Activated CD4-positive, alpha-beta T cell treated with anti-CD3 and anti-CD28 coated beads for 36 hours (primary cell): ENCODE measurements at regions of chr7 and their contacts with region 1.

Region 1: DNA sequence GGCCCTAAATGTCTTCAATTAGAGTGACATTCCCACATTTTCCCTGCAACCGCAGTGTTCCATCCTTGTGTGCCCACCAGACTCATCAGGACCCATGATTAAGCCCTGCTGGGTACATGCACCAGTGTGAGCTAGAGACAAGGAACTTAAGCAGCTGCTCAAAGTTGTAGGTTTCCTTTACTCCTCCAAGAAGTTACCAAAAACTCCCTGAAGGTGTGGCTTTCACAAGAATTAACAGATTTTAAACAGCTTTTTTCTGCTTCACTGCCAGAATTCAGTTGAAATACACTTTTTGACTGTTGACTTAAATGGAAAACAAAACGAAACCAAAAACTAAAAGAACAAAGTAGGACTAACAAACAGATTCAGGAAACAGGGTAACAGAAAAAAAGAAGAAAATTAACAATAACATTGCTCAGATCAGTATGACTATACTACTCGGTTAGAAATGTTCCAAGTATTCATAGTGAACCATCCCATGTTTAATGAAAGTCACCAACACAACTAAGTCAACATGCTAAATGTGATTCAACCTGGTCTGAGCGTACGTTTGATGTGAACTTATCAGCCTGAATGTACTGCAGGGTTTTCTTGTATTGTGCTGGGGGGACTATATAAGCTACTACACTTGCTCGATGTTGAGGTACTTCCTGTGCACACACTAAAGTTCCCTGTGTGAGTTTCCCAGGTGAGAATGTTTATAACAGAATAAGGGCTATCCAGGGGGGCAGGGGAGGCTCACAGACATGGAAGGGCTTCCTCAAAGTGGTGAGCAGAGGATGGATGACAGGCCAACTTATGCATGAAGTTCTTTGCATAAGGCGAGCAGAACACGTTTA is 22.2 kb downstream of the SLC37A3 start:
- DNase-seq: peak; percentile 45
- ATAC-seq: peak; percentile 90
- H3K4me3 Mint-ChIP-seq: peak overlapping the region; percentile 57
- H3K27ac Mint-ChIP-seq: peak overlapping the region; percentile 95
- H3K4me1 Mint-ChIP-seq: peaks cover 53% of the 10 kb centered on the region
- H3K27me3 Mint-ChIP-seq: no peaks in the 10 kb centered on the region

Region 2: GRCh38 chr7:139901056-139901795 is 474.9 kb before region 1 on chr7:
- CTCF ChIA-PET with region 1: no interaction called
- POLR2A ChIA-PET with region 1: no interaction called
- intact Hi-C with region 1: no loop called
- DNase-seq: no peak
- ATAC-seq: no peak
- H3K4me3 Mint-ChIP-seq: no peak overlapping the region
- H3K27ac Mint-ChIP-seq: no peak overlapping the region
- H3K4me1 Mint-ChIP-seq: no peaks in the 10 kb centered on the region
- H3K27me3 Mint-ChIP-seq: no peaks in the 10 kb centered on the region

Region 3: GRCh38 chr7:140390466-140391190 is 14.5 kb after region 1 on chr7:
- CTCF ChIA-PET with region 1: interaction called, 11 read pairs
- POLR2A ChIA-PET with region 1: interaction called, 30 read pairs
- intact Hi-C with region 1: loop called (anchors 1 kb)
- DNase-seq: peak; percentile 55
- ATAC-seq: peak; percentile 57
- H3K4me3 Mint-ChIP-seq: no peak overlapping the region
- H3K27ac Mint-ChIP-seq: no peak overlapping the region
- H3K4me1 Mint-ChIP-seq: peaks cover 3% of the 10 kb centered on the region
- H3K27me3 Mint-ChIP-seq: no peaks in the 10 kb centered on the region

Region 4: GRCh38 chr7:140397784-140398750 is 22.0 kb after region 1 on chr7 and contains the start of gene SLC37A3:
- CTCF ChIA-PET with region 1: interaction called, 6 read pairs
- POLR2A ChIA-PET with region 1: interaction called, 30 read pairs
- intact Hi-C with region 1: loop called (anchors 1 kb)
- DNase-seq: peak; percentile 94
- ATAC-seq: peak; percentile 86
- H3K4me3 Mint-ChIP-seq: peak within 1 kb of the TSS; percentile 88
- H3K27ac Mint-ChIP-seq: peak within 1 kb of the TSS; percentile 91
- H3K4me1 Mint-ChIP-seq: peaks cover 37% of the 10 kb centered on the region
- H3K27me3 Mint-ChIP-seq: no peaks in the 10 kb centered on the region
- total RNA-seq, gene SLC37A3: 47.5 to 55.5 TPM

Region 5: GRCh38 chr7:140403878-140404564 is 27.9 kb after region 1 on chr7 and contains the start of gene RAB19:
- CTCF ChIA-PET with region 1: interaction called, 3 read pairs
- POLR2A ChIA-PET with region 1: interaction called, 19 read pairs
- intact Hi-C with region 1: loop called (anchors 1 kb)
- DNase-seq: peak; percentile 63
- ATAC-seq: peak; percentile 77
- H3K4me3 Mint-ChIP-seq: peak within 1 kb of the TSS; percentile 90
- H3K27ac Mint-ChIP-seq: peak within 1 kb of the TSS; percentile 97
- H3K4me1 Mint-ChIP-seq: peaks cover 35% of the 10 kb centered on the region
- H3K27me3 Mint-ChIP-seq: no peaks in the 10 kb centered on the region
- total RNA-seq, gene RAB19: 11.3 to 12.8 TPM

Region 6: DNA sequence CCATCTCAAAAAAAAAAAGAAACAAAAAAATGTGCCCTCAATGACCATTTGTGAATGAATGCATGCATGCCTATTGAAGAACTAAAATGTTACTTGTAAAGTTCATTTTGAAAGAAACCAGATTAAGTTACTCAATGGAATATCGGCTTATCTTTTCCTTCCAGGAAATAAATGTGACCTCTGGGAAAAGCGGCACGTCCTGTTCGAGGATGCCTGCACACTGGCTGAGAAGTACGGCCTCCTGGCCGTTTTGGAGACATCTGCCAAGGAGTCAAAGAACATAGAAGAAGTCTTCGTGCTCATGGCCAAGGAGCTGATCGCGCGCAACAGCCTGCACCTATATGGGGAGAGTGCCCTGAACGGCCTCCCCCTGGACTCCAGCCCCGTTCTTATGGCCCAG is 49.6 kb after region 1 on chr7:
- CTCF ChIA-PET with region 1: no interaction called
- POLR2A ChIA-PET with region 1: interaction called, 11 read pairs
- intact Hi-C with region 1: no loop called
- DNase-seq: no peak
- ATAC-seq: no peak
- H3K4me3 Mint-ChIP-seq: no peak overlapping the region
- H3K27ac Mint-ChIP-seq: no peak overlapping the region
- H3K4me1 Mint-ChIP-seq: no peaks in the 10 kb centered on the region
- H3K27me3 Mint-ChIP-seq: no peaks in the 10 kb centered on the region

Region 7: GRCh38 chr7:140517546-140518369 is 141.6 kb after region 1 on chr7:
- CTCF ChIA-PET with region 1: no interaction called
- POLR2A ChIA-PET with region 1: no interaction called
- intact Hi-C with region 1: no loop called
- DNase-seq: peak; percentile 86
- ATAC-seq: peak; percentile 91
- H3K4me3 Mint-ChIP-seq: no peak overlapping the region
- H3K27ac Mint-ChIP-seq: no peak overlapping the region
- H3K4me1 Mint-ChIP-seq: peaks cover 3% of the 10 kb centered on the region
- H3K27me3 Mint-ChIP-seq: peaks cover 6% of the 10 kb centered on the region

Region 8: GRCh38 chr7:140661121-140661520 is 285.0 kb after region 1 on chr7:
- CTCF ChIA-PET with region 1: no interaction called
- POLR2A ChIA-PET with region 1: no interaction called
- intact Hi-C with region 1: no loop called
- DNase-seq: no peak
- ATAC-seq: no peak
- H3K4me3 Mint-ChIP-seq: no peak overlapping the region
- H3K27ac Mint-ChIP-seq: no peak overlapping the region
- H3K4me1 Mint-ChIP-seq: peaks cover 6% of the 10 kb centered on the region
- H3K27me3 Mint-ChIP-seq: peaks cover 3% of the 10 kb centered on the region